ENCODE measurements at regions of chr3 and their contacts with region 1.

Region 1: GRCh38 chr3:123559040-123559861 is 25.6 kb downstream of the HACD2 start:
- DNase-seq: no peak
- H3K4me3 ChIP-seq: no peak overlapping the region
- CTCF ChIP-seq: peak; percentile 34

Region 2: DNA sequence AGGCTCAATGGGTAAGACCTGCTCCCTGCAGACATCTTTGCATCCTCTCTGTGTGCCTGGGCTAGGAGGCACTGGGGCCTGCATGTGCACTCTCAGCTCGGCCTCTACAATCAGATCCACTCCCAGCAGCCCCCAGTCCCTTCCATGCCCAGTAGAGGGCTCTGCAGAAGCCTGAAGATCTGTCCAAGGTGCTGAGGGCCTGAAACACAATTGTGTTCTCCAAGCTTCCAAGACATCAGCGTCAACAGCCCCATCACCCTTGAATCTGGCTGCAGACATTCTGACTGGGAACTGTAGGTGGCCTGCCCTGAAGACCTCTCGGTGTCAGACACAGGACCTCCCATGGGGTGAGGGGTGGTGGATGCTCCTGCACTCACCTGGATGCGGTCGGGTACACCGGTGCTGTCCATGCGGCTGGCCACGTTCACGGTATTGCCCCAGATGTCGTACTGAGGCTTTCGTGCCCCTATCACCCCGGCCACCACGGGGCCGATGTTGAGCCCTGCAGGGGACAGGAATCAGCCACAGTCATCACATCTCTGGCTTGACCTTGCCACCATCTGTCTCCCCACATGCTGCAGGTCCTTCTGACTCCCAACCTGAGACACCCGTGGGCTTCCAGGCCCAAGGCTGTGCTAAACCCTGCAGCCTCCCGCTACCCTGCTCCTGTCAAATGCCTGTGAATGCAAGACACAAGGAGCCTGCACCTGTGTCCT is 272.8 kb before region 1 on chr3:
- CTCF ChIA-PET with region 1: interaction called, 13 read pairs
- POLR2A ChIA-PET with region 1: no interaction called
- DNase-seq: no peak
- H3K4me3 ChIP-seq: no peak overlapping the region
- CTCF ChIP-seq: peak; percentile 96

Region 3: GRCh38 chr3:123449102-123449996 is 109.9 kb before region 1 on chr3:
- CTCF ChIA-PET with region 1: interaction called, 11 read pairs
- POLR2A ChIA-PET with region 1: no interaction called
- DNase-seq: no peak
- H3K4me3 ChIP-seq: peak overlapping the region; percentile 58
- CTCF ChIP-seq: no peak

Region 4: GRCh38 chr3:123521179-123521969 is 37.9 kb before region 1 on chr3:
- CTCF ChIA-PET with region 1: interaction called, 12 read pairs
- POLR2A ChIA-PET with region 1: no interaction called
- DNase-seq: peak; percentile 2
- H3K4me3 ChIP-seq: no peak overlapping the region
- CTCF ChIP-seq: no peak

Region 5: DNA sequence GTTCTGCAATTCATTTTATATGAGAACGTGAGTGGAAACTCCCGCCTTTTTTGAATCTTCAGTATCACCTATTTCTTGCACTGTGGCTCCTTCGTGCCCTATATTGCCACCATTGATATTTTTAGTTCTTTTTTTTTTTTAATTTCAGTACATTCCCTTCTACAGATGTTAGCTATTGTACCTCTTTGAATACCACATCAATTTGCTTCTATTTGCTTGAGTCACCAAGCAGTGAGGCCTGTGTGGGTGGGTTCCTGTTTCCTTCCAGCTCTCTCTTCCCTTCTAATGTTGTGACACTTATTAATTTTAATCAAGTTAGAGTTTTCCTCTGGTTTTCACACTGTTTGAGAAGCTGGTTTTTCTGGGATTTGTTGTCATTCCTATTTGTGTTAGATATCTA is 16.9 kb after region 1 on chr3:
- CTCF ChIA-PET with region 1: interaction called, 99 read pairs
- POLR2A ChIA-PET with region 1: no interaction called
- DNase-seq: no peak
- H3K4me3 ChIP-seq: no peak overlapping the region
- CTCF ChIP-seq: no peak

Region 6: GRCh38 chr3:123618768-123619484 is 59.7 kb after region 1 on chr3:
- CTCF ChIA-PET with region 1: no interaction called
- POLR2A ChIA-PET with region 1: no interaction called
- DNase-seq: peak; percentile 46
- H3K4me3 ChIP-seq: peak overlapping the region; percentile 57
- CTCF ChIP-seq: no peak

Measured in AG04449 (cell line).